CD4-positive, alpha-beta T cell (primary cell): ENCODE measurements at regions of chr5 and their contacts with region 1.

Region 1: DNA sequence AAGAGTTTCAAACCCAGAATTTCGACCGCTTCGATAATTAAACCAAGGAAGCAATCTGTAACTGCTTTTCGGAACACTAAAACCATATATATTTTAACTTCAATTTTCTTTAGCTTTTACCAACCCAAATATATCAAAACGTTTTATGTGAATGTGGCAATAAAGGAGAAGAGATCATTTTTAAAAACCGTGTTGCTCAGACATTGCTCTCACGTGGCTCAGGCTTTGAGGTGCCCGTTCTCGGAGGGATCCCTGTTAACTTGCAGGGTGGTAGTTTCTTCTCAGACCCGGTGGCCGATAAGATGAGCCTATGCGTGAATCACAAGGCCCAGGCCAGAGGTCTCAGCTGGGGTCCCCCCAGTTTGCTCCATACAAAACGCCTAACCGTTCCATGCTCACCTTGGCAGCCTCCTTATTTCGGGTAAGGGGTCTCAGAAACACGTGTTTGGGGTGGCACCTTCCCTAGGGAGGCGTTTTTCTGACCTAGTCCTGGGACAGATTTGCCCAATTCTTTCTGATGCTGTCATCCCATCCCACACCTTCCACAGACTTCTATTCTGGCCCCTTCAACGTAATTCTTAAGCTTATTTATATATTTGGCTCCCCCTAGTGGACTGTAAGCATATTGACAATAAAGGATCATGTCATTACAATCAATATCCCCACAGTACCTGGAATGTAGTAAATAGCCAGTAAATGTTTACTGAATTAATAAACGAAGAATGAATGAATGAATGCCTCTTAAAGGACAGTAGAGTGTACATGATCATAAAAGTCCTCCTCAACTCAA is 48.1 kb downstream of the THBS4 start:
- DNase-seq: peak in 4 of 14 experiments; percentile 20 to 68 (median 59)
- ATAC-seq: peak; percentile 83
- H3K4me3 ChIP-seq: peak overlapping the region; percentile 39
- H3K4me3 Mint-ChIP-seq: peak overlapping the region; percentile 89
- H3K27ac ChIP-seq: no peak overlapping the region
- H3K27ac Mint-ChIP-seq: peak overlapping the region; percentile 71
- H3K4me1 ChIP-seq: peaks cover 10% of the 10 kb centered on the region
- H3K4me1 Mint-ChIP-seq: peaks cover 16% of the 10 kb centered on the region
- H3K27me3 ChIP-seq: no peaks in the 10 kb centered on the region
- H3K27me3 Mint-ChIP-seq: no peaks in the 10 kb centered on the region
- CTCF ChIP-seq: peak; percentile 46

Region 2: DNA sequence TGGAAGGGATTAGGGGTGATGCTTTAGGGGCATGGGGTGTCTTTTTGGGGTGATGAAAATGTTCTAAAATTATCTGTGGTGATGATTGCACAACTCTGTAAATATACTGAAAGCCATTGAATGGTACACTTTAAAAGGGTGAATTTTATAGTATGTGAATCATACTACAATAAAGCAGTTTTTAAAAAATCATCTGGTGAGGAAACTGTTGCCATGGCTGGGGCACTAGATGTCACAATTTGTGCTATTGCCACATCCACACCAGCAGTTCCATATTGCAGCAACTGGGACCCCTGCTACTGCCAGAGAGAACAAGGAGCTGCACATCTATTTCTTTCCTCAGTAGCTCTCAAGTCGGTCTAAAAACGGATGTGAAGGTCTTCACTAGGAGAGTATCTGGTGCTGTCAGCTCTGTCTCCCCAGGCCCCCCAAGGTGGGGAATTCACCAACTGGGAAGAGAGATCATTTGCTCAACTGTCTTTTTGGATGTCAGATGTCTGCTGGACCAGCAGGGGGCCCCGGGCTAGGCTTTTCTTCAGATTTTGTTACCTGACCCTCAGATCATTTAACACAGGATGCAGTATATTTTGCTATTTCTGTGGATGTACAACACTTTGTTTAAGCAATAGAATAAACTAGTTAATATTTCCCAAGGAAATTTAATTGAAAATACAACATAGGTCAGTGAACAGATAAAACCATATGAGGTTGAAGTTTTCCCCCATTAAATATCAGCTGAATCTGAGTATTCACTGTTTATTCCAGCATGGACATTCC is 380.5 kb before region 1 on chr5:
- CTCF ChIA-PET with region 1: no interaction called
- POLR2A ChIA-PET with region 1: no interaction called
- intact Hi-C with region 1: loop called (anchors 2 to 5 kb)
- DNase-seq: peak in 12 of 14 experiments; percentile 7 to 59 (median 25)
- ATAC-seq: no peak
- H3K4me3 ChIP-seq: no peak overlapping the region
- H3K4me3 Mint-ChIP-seq: no peak overlapping the region
- H3K27ac ChIP-seq: no peak overlapping the region
- H3K27ac Mint-ChIP-seq: no peak overlapping the region
- H3K4me1 ChIP-seq: no peaks in the 10 kb centered on the region
- H3K4me1 Mint-ChIP-seq: peaks cover 13% of the 10 kb centered on the region
- H3K27me3 ChIP-seq: no peaks in the 10 kb centered on the region
- H3K27me3 Mint-ChIP-seq: no peaks in the 10 kb centered on the region
- CTCF ChIP-seq: peak; percentile 63

Region 3: GRCh38 chr5:79857714-79858409 is 225.4 kb before region 1 on chr5:
- CTCF ChIA-PET with region 1: interaction called, 8 read pairs
- POLR2A ChIA-PET with region 1: no interaction called
- intact Hi-C with region 1: loop called in 1 of 2 experiments (anchors 2 kb)
- DNase-seq: peak; percentile 58 to 86 (median 77)
- ATAC-seq: peak; percentile 65
- H3K4me3 ChIP-seq: no peak overlapping the region
- H3K4me3 Mint-ChIP-seq: no peak overlapping the region
- H3K27ac ChIP-seq: no peak overlapping the region
- H3K27ac Mint-ChIP-seq: no peak overlapping the region
- H3K4me1 ChIP-seq: no peaks in the 10 kb centered on the region
- H3K4me1 Mint-ChIP-seq: peaks cover 4% of the 10 kb centered on the region
- H3K27me3 ChIP-seq: peaks cover 0 to 3% of the 10 kb centered on the region in 2 experiments
- H3K27me3 Mint-ChIP-seq: peaks cover 6% of the 10 kb centered on the region
- CTCF ChIP-seq: peak; percentile 96

Region 4: DNA sequence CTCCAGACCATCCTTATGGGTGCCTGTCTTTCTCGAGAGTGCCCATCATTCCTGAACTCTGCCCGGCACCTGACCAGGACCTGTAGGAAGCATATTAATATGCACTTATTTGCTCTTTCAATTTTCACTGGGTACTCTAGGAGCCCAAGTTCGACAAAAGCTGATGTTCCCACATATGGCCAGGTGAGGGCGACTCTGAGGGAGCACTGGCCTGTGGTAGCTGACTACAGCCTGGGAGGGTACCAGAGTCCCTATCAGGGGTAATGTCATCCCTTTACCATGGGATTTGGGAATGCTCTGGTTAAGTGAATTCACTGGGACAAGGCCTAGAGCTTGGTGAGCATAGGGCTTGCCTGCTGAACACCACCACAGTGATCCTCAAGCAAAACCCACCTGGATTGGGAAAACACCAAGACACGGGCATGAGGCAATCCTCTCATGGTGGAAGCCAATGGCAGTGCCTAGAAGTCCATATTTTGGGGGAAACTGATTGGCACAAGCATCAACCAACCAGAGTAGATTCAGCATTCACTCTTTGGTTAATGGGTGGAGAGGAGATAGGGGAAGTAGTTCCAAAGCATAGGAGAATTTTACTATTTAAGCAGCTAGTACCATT is 204.5 kb before region 1 on chr5:
- CTCF ChIA-PET with region 1: interaction called, 7 read pairs
- POLR2A ChIA-PET with region 1: interaction called, 3 read pairs
- intact Hi-C with region 1: loop called in 1 of 2 experiments (anchors 5 kb)
- DNase-seq: peak in 4 of 14 experiments; percentile 4 to 29 (median 16)
- ATAC-seq: no peak
- H3K4me3 ChIP-seq: no peak overlapping the region
- H3K4me3 Mint-ChIP-seq: no peak overlapping the region
- H3K27ac ChIP-seq: no peak overlapping the region
- H3K27ac Mint-ChIP-seq: no peak overlapping the region
- H3K4me1 ChIP-seq: no peaks in the 10 kb centered on the region
- H3K4me1 Mint-ChIP-seq: no peaks in the 10 kb centered on the region
- H3K27me3 ChIP-seq: peaks cover 0 to 2% of the 10 kb centered on the region in 2 experiments
- H3K27me3 Mint-ChIP-seq: no peaks in the 10 kb centered on the region
- CTCF ChIP-seq: no peak

Region 5: DNA sequence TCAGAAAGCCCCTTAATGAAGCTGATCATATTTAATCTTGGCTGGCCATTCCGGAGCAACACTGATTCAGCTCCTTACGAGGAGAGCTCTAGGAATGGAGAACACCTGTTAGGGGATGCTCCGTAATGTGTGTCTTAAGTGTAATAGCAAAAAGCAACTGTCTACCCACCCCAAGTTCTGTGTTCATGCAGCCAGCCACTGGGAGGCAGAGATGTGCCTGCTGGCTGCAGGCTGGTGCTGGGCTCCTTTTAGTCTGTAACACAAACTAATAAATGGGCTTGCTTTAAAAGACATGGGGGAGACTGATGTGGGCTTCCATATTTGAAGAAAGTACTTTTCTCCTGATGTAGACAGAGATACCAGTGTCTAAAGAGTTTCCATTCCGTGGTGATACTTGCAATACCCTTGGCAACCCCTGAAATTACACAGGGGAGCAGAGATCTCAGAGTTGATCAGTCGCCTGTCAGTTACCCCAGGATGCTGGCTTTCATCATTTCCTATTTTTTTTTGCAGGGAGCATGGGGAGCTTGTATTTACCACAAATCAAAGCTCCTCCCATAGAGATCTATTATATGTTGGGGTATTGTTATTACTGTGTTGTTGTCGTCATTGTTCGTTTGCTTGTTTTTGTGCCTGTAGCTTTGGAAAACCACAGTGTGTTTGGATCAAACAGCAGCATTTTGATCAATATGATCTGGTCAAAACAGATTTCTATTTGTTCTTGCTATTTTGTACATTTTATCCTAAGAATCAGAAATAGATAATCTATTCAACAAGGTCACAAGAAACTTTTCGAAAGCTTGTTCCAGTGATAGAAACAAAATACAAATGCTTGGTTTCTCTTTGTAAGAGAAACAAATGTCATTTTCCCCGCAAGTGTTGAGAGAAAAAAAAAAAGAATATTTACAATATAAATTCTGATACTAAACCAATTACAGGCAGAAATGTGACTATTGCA is 158.1 kb before region 1 on chr5:
- CTCF ChIA-PET with region 1: no interaction called
- POLR2A ChIA-PET with region 1: no interaction called
- intact Hi-C with region 1: loop called (anchors 1 to 2 kb)
- DNase-seq: peak in 4 of 14 experiments; percentile 9 to 36 (median 21)
- ATAC-seq: no peak
- H3K4me3 ChIP-seq: no peak overlapping the region
- H3K4me3 Mint-ChIP-seq: no peak overlapping the region
- H3K27ac ChIP-seq: no peak overlapping the region
- H3K27ac Mint-ChIP-seq: no peak overlapping the region
- H3K4me1 ChIP-seq: no peaks in the 10 kb centered on the region
- H3K4me1 Mint-ChIP-seq: no peaks in the 10 kb centered on the region
- H3K27me3 ChIP-seq: no peaks in the 10 kb centered on the region
- H3K27me3 Mint-ChIP-seq: no peaks in the 10 kb centered on the region
- CTCF ChIP-seq: no peak